ENCODE measurements at regions of chr3 and their contacts with region 1.

Region 1: GRCh38 chr3:179278932-179279693 is 28.2 kb upstream of the KCNMB3 start:
- DNase-seq: no peak
- H3K4me3 ChIP-seq: no peak overlapping the region
- H3K27ac ChIP-seq: no peak overlapping the region
- H3K4me1 ChIP-seq: no peaks in the 10 kb centered on the region
- H3K27me3 ChIP-seq: no peaks in the 10 kb centered on the region
- CTCF ChIP-seq: no peak
- POLR2A ChIP-seq: no peak

Region 2: GRCh38 chr3:179223548-179223947 is 55.6 kb before region 1 on chr3:
- intact Hi-C with region 1: loop called (anchors 2 kb)
- DNase-seq: no peak
- H3K4me3 ChIP-seq: no peak overlapping the region
- H3K27ac ChIP-seq: no peak overlapping the region
- H3K4me1 ChIP-seq: no peaks in the 10 kb centered on the region
- H3K27me3 ChIP-seq: no peaks in the 10 kb centered on the region
- CTCF ChIP-seq: no peak
- POLR2A ChIP-seq: no peak

Region 3: GRCh38 chr3:179801263-179801662 is 522.1 kb after region 1 on chr3:
- intact Hi-C with region 1: no loop called
- DNase-seq: no peak
- H3K4me3 ChIP-seq: no peak overlapping the region
- H3K27ac ChIP-seq: no peak overlapping the region
- H3K4me1 ChIP-seq: no peaks in the 10 kb centered on the region
- H3K27me3 ChIP-seq: no peaks in the 10 kb centered on the region
- CTCF ChIP-seq: no peak
- POLR2A ChIP-seq: no peak